PC-9 (cell line): ENCODE measurements at regions of chr11 and their contacts with region 1.

Region 1: GRCh38 chr11:20035701-20036620 is 124.3 kb downstream of the DBX1 start:
- DNase-seq: peak; percentile 46 to 87
- H3K4me3 ChIP-seq: no peak overlapping the region
- H3K27ac ChIP-seq: peak overlapping the region; percentile 66
- H3K4me1 ChIP-seq: peaks cover 46% of the 10 kb centered on the region
- H3K27me3 ChIP-seq: no peaks in the 10 kb centered on the region
- CTCF ChIP-seq: no peak

Region 2: GRCh38 chr11:19978668-19979518 is 57.1 kb before region 1 on chr11:
- CTCF ChIA-PET with region 1: no interaction called
- POLR2A ChIA-PET with region 1: no interaction called
- intact Hi-C with region 1: loop called (anchors 2 kb)
- DNase-seq: peak; percentile 61 to 96
- H3K4me3 ChIP-seq: peak overlapping the region; percentile 4; the same call in 1 of the 2 replicates
- H3K27ac ChIP-seq: peak overlapping the region; percentile 100
- H3K4me1 ChIP-seq: peaks cover 56% of the 10 kb centered on the region
- H3K27me3 ChIP-seq: no peaks in the 10 kb centered on the region
- CTCF ChIP-seq: no peak

Region 3: DNA sequence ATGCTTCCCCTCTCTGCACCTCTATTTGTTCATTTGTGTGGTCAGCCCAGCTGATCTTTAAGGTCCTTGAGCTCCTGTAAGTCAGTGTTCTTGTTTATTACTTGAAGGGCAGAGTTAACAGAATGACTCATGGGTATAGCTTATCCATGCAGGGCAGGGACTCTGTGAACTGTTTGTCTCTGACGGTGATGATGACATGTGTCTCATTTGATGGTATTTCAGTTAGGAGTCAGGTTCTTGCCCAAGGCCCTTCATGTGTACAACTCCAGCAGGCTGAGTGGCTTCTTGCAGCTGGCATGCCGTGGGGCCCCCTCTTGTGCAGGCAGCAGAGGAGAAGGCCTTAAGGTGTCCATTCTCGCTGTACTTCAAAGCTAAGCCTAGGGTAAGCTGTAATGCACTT is 40.8 kb before region 1 on chr11:
- CTCF ChIA-PET with region 1: no interaction called
- POLR2A ChIA-PET with region 1: no interaction called
- intact Hi-C with region 1: loop called (anchors 2 kb)
- DNase-seq: peak; percentile 44 to 97
- H3K4me3 ChIP-seq: no peak overlapping the region
- H3K27ac ChIP-seq: peak overlapping the region; percentile 59
- H3K4me1 ChIP-seq: peaks cover 26% of the 10 kb centered on the region
- H3K27me3 ChIP-seq: no peaks in the 10 kb centered on the region
- CTCF ChIP-seq: no peak

Region 4: GRCh38 chr11:20056109-20056949 is 20.4 kb after region 1 on chr11:
- CTCF ChIA-PET with region 1: no interaction called
- POLR2A ChIA-PET with region 1: no interaction called
- intact Hi-C with region 1: no loop called
- DNase-seq: no peak
- H3K4me3 ChIP-seq: no peak overlapping the region
- H3K27ac ChIP-seq: no peak overlapping the region
- H3K4me1 ChIP-seq: no peaks in the 10 kb centered on the region
- H3K27me3 ChIP-seq: no peaks in the 10 kb centered on the region
- CTCF ChIP-seq: no peak

Region 5: GRCh38 chr11:20110908-20111669 is 75.1 kb after region 1 on chr11:
- CTCF ChIA-PET with region 1: no interaction called
- POLR2A ChIA-PET with region 1: no interaction called
- intact Hi-C with region 1: loop called (anchors 5 kb)
- DNase-seq: peak; percentile 58 to 62
- H3K4me3 ChIP-seq: no peak overlapping the region
- H3K27ac ChIP-seq: 0 out of 2 replicates have a peak overlapping the region, but pooled peaks have one; percentile 51
- H3K4me1 ChIP-seq: peaks cover 22% of the 10 kb centered on the region
- H3K27me3 ChIP-seq: no peaks in the 10 kb centered on the region
- CTCF ChIP-seq: peak; percentile 96

Region 6: DNA sequence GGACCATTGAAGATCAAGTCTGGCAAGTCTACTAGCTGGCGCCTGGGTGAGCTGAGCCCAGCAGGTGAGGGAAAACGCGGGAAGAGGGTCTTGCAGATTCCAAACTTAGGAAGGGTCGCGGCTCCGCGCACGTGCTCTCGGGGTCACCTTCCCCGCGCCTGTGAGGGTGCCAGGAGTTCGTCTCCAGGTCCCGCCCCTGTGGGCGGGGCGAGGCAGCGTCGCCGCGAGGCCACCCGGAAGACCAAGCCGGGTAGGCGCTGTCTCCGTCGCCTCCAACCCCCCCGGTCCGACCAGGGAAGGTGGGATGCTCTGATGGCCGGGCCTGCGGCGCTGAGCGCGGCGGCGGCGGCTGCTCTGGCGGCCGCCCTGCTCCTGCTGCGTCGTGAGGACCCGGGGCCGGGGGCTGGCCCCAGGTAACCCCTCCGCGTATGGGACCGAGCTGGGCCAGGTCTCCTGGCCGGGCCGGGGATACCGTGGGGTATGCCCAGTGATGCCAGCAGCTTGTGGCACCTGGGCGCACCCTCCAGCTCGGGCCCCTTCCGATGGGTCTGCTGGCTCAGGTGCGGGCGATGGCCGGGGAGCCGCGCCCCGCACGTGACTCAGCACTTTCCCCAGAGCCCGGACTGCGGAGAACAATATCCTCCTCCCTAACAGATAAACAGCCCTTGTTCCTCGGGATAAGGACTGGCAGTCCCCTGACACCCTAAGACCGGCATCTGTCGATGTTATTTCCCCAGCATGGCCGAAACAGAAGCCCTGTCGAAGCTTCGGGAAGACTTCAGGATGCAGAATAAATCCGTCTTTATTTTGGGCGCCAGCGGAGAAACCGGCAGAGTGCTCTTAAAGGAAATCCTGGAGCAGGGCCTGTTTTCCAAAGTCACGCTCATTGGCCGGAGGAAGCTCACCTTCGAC is 327.8 kb after region 1 on chr11 and contains the start of gene HTATIP2:
- CTCF ChIA-PET with region 1: no interaction called
- POLR2A ChIA-PET with region 1: interaction called, 4 read pairs
- intact Hi-C with region 1: loop called (anchors 10 kb)
- DNase-seq: peak; percentile 40 to 57
- H3K4me3 ChIP-seq: peak within 1 kb of the TSS; percentile 76
- H3K27ac ChIP-seq: peak within 1 kb of the TSS; percentile 86
- H3K4me1 ChIP-seq: peaks cover 41% of the 10 kb centered on the region
- H3K27me3 ChIP-seq: no peaks in the 10 kb centered on the region
- CTCF ChIP-seq: no peak
- total RNA-seq, gene HTATIP2: 180 and 194 TPM in 2 replicates

Region 7: GRCh38 chr11:20530942-20531689 is 495.2 kb after region 1 on chr11:
- CTCF ChIA-PET with region 1: no interaction called
- POLR2A ChIA-PET with region 1: no interaction called
- intact Hi-C with region 1: no loop called
- DNase-seq: no peak
- H3K4me3 ChIP-seq: no peak overlapping the region
- H3K27ac ChIP-seq: no peak overlapping the region
- H3K4me1 ChIP-seq: no peaks in the 10 kb centered on the region
- H3K27me3 ChIP-seq: peaks cover 18% of the 10 kb centered on the region
- CTCF ChIP-seq: no peak

Region 8: DNA sequence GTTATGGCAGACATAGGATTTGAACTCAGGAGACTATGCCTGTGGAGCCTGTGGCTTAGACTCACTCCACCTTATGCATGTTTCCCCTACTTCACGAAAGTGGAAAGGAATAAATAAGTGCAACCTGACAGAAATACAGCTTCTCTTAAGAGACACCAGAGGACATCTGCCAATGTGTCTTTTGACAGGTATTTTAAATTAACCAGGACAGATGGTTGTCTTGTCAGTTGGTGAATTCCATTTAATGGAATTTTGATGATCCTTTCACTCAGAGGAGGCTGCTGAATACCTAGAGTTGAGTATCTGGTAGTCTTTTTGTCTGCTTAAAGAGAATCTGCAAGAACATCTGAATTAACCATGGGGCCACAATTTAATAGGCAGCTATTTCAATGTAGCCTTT is 679.5 kb after region 1 on chr11:
- CTCF ChIA-PET with region 1: no interaction called
- POLR2A ChIA-PET with region 1: no interaction called
- intact Hi-C with region 1: no loop called
- DNase-seq: no peak
- H3K4me3 ChIP-seq: no peak overlapping the region
- H3K27ac ChIP-seq: no peak overlapping the region
- H3K4me1 ChIP-seq: no peaks in the 10 kb centered on the region
- H3K27me3 ChIP-seq: no peaks in the 10 kb centered on the region
- CTCF ChIP-seq: no peak